ENCODE measurements at regions of chr1 and their contacts with region 1.

Region 1: DNA sequence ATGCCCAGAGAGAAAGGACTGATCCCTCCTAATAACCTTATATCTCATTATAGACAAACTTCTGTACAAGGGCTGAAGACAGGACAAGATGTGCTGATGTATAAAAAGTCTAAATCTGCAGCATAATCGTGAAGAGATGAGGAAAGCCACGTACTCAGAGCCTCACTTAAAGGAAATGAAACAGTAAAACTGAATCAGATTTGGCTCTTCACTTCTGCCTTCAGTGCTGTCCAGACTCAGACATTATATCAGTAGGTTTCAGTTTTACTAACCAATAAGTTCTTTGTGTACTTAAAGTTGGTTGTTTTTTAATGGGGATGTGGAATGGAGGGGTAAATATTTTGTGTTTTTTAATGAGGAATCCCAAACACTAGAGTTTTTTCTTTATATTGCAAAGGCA is 45.3 kb upstream of the RGS1 start:
- DNase-seq: no peak
- H3K4me3 Mint-ChIP-seq: peak overlapping the region; percentile 9
- H3K27ac Mint-ChIP-seq: no peak overlapping the region
- H3K4me1 Mint-ChIP-seq: peaks cover 39% of the 10 kb centered on the region
- H3K27me3 Mint-ChIP-seq: peaks cover 9% of the 10 kb centered on the region

Region 2: GRCh38 chr1:192550922-192551534 is 20.8 kb after region 1 on chr1:
- intact Hi-C with region 1: loop called (anchors 1 kb)
- DNase-seq: no peak
- H3K4me3 Mint-ChIP-seq: no peak overlapping the region
- H3K27ac Mint-ChIP-seq: peak overlapping the region; percentile 64
- H3K4me1 Mint-ChIP-seq: peaks cover 60% of the 10 kb centered on the region
- H3K27me3 Mint-ChIP-seq: no peaks in the 10 kb centered on the region